ENCODE measurements at regions of chr3 and their contacts with region 1.

Region 1: GRCh38 chr3:23805633-23806533 is at the start of gene UBE2E1:
- DNase-seq: peak; percentile 81 to 92 (median 92)
- ATAC-seq: peak; percentile 86 to 89
- H3K4me3 ChIP-seq: peak within 1 kb of the TSS; percentile 100
- H3K27ac ChIP-seq: peak within 1 kb of the TSS; percentile 74
- H3K4me1 ChIP-seq: no peaks in the 10 kb centered on the region
- H3K27me3 ChIP-seq: no peaks in the 10 kb centered on the region
- total RNA-seq, gene UBE2E1: 47.9 to 64.4 (median 53.0) TPM

Region 2: GRCh38 chr3:23202921-23203707 is 602.8 kb before region 1 on chr3 and contains the start of gene UBE2E2:
- intact Hi-C with region 1: loop called in 1 of 4 experiments (anchors 10 kb)
- DNase-seq: peak; percentile 78 to 91 (median 91)
- ATAC-seq: peak; percentile 87 to 94
- H3K4me3 ChIP-seq: peak within 1 kb of the TSS; percentile 68
- H3K27ac ChIP-seq: peak within 1 kb of the TSS; percentile 49
- H3K4me1 ChIP-seq: peaks cover 2% of the 10 kb centered on the region
- H3K27me3 ChIP-seq: no peaks in the 10 kb centered on the region
- total RNA-seq, gene UBE2E2: 36.6 to 49.2 (median 46.5) TPM

Region 3: DNA sequence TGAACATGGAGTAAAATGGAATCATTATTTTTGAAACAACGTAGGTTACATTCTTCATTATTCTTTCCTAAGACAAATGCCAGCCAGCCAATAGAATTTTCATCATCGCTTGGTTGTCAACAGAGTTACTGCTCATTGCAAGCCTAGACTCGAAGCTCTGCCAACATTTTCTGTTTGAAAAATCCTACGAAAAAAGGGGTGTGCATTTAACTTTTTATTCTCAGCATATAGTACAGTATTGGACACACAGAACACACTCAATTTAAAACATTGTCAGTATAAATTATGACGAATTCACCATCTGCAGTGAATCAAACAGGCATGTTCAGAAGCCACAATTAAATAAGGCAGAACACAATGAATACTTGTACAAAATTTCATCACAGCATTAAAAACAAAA is 371.3 kb after region 1 on chr3:
- intact Hi-C with region 1: no loop called
- DNase-seq: no peak
- ATAC-seq: no peak
- H3K4me3 ChIP-seq: no peak overlapping the region
- H3K27ac ChIP-seq: no peak overlapping the region
- H3K4me1 ChIP-seq: no peaks in the 10 kb centered on the region
- H3K27me3 ChIP-seq: no peaks in the 10 kb centered on the region

Measured in right cardiac atrium (tissue), 5 donors.